ENCODE measurements at regions of chr19 and their contacts with region 1.

Region 1: GRCh38 chr19:10461047-10461790 is 40.9 kb downstream of the PDE4A start:
- DNase-seq: peak; percentile 81
- H3K4me3 Mint-ChIP-seq: no peak overlapping the region
- H3K27ac Mint-ChIP-seq: peak overlapping the region; percentile 29
- H3K4me1 Mint-ChIP-seq: no peaks in the 10 kb centered on the region
- H3K27me3 Mint-ChIP-seq: no peaks in the 10 kb centered on the region

Region 2: GRCh38 chr19:9818734-9819589 is 642.3 kb before region 1 on chr19 and contains the start of gene FBXL12:
- intact Hi-C with region 1: loop called (anchors 1 kb)
- DNase-seq: peak; percentile 100
- H3K4me3 Mint-ChIP-seq: peak within 1 kb of the TSS; percentile 90
- H3K27ac Mint-ChIP-seq: peak within 1 kb of the TSS; percentile 87
- H3K4me1 Mint-ChIP-seq: peaks cover 27% of the 10 kb centered on the region
- H3K27me3 Mint-ChIP-seq: no peaks in the 10 kb centered on the region
- total RNA-seq, gene FBXL12: 19.4 and 20.7 TPM in 2 replicates

Region 3: GRCh38 chr19:10431943-10432735 is 29.1 kb before region 1 on chr19:
- intact Hi-C with region 1: loop called (anchors 1 kb)
- DNase-seq: no peak
- H3K4me3 Mint-ChIP-seq: peak overlapping the region; percentile 82
- H3K27ac Mint-ChIP-seq: peak overlapping the region; percentile 91
- H3K4me1 Mint-ChIP-seq: peaks cover 66% of the 10 kb centered on the region
- H3K27me3 Mint-ChIP-seq: peaks cover 20% of the 10 kb centered on the region

Region 4: DNA sequence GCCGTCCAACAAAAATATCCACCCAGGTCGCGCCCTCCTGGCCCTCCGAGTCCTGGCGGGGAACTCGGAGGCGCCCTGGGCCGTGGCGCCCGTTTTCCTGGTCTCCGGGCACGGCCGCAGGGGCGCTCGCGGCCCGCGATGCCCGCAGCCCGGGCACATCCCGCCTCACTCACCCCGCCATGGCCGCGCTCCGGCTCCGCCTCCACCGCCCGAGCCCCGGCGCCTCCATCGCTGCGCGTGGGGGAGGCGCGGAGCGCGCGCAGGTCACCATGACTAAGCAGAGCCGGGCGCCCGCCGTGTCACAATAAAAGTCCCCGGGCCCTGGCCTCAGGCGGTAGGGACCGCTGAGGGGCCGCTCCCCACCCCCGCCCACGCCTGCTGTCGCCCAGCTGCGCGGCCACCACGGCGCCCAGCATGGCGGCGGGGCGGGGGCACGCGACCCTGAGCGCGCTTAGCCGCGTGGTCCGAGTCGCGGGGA is 41.3 kb after region 1 on chr19:
- intact Hi-C with region 1: loop called (anchors 5 kb)
- DNase-seq: peak; percentile 92
- H3K4me3 Mint-ChIP-seq: peak overlapping the region; percentile 94
- H3K27ac Mint-ChIP-seq: peak overlapping the region; percentile 88
- H3K4me1 Mint-ChIP-seq: peaks cover 31% of the 10 kb centered on the region
- H3K27me3 Mint-ChIP-seq: no peaks in the 10 kb centered on the region

Region 5: GRCh38 chr19:10870955-10871603 is 409.9 kb after region 1 on chr19 and contains the start of gene CARM1:
- intact Hi-C with region 1: loop called (anchors 1 kb)
- DNase-seq: peak; percentile 98
- H3K4me3 Mint-ChIP-seq: peak within 1 kb of the TSS; percentile 88
- H3K27ac Mint-ChIP-seq: peak within 1 kb of the TSS; percentile 93
- H3K4me1 Mint-ChIP-seq: peaks cover 37% of the 10 kb centered on the region
- H3K27me3 Mint-ChIP-seq: no peaks in the 10 kb centered on the region
- total RNA-seq, gene CARM1: 85.9 and 88.0 TPM in 2 replicates